ENCODE measurements at regions of chr19 and their contacts with region 1.

Region 1: DNA sequence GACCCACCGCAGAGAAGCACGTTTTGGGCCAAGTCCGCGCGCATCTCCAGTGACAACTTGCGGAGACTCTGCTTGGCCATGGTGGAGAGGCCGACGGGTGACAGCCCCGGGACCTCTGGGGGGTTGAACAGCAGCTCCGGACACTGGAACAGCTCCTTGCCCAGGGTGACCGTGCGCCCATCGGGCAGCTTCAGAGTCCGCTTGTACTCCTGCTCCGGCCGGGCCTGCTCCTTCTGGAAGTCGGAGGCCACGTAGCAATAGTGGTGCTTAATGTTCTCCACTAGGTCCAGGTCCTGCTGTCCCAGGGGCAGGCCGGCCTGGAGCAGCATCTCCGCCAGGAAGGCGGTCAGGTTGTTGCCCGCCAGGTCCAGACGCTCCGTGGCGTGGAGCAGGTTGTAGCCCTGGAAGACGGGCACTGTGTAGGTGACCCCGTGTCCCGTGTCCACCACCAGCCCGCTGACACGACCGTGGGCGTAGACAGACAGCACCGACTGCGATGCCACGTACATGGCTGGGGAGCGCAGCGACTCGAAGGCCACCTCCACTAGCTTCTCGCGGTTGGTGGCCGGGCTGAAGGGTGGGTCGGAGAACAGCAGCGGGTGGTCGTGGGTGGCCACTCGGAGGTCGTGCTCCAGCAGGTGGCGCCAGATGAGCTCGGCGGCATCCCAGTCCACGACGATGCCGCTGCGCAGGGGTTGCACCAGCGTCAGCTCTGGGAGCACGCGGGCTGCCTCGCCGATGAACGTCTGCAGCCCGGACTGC is 743 bp downstream of the ACTL9 start:
- DNase-seq: peak; percentile 32 to 44 (median 36)
- ATAC-seq: peak; percentile 78
- H3K4me3 ChIP-seq: no peak overlapping the region
- H3K27ac ChIP-seq: no peak overlapping the region
- H3K4me1 ChIP-seq: peaks cover 0 to 14% of the 10 kb centered on the region in 2 experiments; a peak in 2 of 5 replicates
- H3K27me3 ChIP-seq: peaks cover 0 to 6% of the 10 kb centered on the region in 2 experiments; a peak in 1 of 5 replicates
- CTCF ChIP-seq: peak; percentile 53 to 63 (median 53)
- EP300 ChIP-seq: no peak
- POLR2A ChIP-seq: no peak
- RAD21 ChIP-seq: peak; percentile 22 to 66; a peak in 2 of 4 replicates

Region 2: DNA sequence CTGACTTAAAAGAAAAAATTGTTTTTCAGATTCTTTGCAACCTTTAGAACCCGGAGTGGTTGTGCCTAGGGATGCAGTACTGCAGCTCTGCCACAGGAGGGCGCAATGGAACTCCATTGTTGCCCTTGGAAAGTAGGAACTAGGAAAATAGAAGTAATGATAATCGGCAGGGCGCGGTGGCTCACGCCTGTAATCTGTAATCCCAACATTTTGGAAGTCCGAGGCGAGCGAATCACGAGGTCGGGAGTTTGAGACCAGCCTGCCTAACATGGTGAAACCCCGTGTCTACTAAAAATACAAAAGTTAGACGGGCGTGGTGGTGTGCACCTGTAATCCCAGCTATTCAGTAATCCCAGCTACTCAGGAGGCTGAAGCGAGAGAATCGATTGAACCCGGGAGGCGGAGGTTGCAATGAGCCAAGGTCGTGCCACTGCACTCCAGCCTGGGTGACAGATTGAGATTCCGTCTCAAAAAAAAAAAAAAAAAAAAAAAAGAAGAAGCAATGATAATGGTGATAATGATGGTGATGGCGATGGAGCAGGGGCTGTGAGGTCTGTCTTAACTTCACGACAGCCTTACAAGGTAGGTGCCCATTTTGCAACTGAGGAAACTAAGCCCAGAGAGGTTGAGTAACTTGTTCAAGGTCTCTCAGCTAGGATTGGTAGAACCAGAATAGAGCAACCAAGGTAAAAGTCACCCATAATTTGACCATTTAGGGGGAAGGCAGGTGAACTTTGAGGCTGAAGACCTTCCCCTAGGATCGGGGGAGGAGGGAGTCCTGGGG is 81.8 kb before region 1 on chr19:
- CTCF ChIA-PET with region 1: interaction called, 3 read pairs
- POLR2A ChIA-PET with region 1: interaction called, 3 read pairs
- in situ Hi-C with region 1: loop called (anchors 10 kb)
- intact Hi-C with region 1: loop called (anchors 10 kb)
- DNase-seq: peak; percentile 68 to 73 (median 71)
- ATAC-seq: peak; percentile 79
- H3K4me3 ChIP-seq: no peak overlapping the region
- H3K27ac ChIP-seq: no peak overlapping the region
- H3K4me1 ChIP-seq: no peaks in the 10 kb centered on the region; a peak in 1 of 5 replicates
- H3K27me3 ChIP-seq: peaks cover 11 to 18% of the 10 kb centered on the region in 2 experiments; a peak in 3 of 5 replicates
- CTCF ChIP-seq: peak; percentile 85 to 94 (median 94)
- EP300 ChIP-seq: no peak
- POLR2A ChIP-seq: no peak
- RAD21 ChIP-seq: peak; percentile 64 to 73

Region 3: DNA sequence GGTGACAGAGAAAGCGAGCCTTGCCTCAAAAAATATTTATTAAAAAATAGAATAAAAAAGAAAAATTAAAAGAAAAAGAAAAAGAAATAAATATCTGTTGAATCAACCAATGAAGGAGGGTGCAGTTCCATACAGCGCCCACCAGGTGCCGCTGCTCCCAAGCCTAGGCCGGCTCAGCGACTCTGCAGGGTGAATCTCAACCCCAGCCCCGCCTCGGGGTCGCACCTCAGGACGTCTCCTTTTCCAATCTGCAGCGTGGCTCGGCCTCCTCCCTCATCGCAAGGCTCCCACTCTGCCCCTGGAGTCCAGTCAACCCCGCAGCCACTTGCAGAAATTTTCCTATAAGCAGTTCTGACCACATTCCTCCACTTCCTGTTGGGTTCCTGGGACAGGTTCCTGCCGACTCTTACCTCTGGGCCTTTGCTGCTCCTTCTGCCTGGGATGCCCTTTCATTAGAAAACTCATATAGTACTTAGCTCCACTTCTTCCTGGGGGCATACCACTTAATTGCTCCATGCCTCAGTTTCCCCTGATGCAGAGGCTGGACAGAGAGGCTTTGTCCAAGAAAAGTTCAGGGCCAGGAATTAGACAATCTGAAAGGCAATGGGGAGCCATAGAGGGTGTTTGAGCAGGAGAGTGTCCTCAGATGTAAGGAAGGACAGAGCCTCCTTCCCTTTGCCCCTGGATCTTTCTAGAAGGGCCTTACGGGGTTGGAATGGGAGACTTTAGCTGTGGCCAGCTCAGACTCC is 43.1 kb before region 1 on chr19:
- CTCF ChIA-PET with region 1: interaction called, 50 read pairs
- POLR2A ChIA-PET with region 1: interaction called, 3 read pairs
- in situ Hi-C with region 1: loop called (anchors 5 kb)
- intact Hi-C with region 1: loop called (anchors 1 kb)
- DNase-seq: peak; percentile 70 to 82 (median 81)
- ATAC-seq: peak; percentile 87
- H3K4me3 ChIP-seq: no peak overlapping the region
- H3K27ac ChIP-seq: no peak overlapping the region
- H3K4me1 ChIP-seq: peaks cover 0 to 6% of the 10 kb centered on the region in 2 experiments; a peak in 3 of 5 replicates
- H3K27me3 ChIP-seq: peaks cover 0 to 21% of the 10 kb centered on the region in 2 experiments; a peak in 2 of 5 replicates
- CTCF ChIP-seq: peak; percentile 90 to 96 (median 90)
- EP300 ChIP-seq: no peak
- POLR2A ChIP-seq: no peak
- RAD21 ChIP-seq: peak; percentile 96 to 97

Region 4: DNA sequence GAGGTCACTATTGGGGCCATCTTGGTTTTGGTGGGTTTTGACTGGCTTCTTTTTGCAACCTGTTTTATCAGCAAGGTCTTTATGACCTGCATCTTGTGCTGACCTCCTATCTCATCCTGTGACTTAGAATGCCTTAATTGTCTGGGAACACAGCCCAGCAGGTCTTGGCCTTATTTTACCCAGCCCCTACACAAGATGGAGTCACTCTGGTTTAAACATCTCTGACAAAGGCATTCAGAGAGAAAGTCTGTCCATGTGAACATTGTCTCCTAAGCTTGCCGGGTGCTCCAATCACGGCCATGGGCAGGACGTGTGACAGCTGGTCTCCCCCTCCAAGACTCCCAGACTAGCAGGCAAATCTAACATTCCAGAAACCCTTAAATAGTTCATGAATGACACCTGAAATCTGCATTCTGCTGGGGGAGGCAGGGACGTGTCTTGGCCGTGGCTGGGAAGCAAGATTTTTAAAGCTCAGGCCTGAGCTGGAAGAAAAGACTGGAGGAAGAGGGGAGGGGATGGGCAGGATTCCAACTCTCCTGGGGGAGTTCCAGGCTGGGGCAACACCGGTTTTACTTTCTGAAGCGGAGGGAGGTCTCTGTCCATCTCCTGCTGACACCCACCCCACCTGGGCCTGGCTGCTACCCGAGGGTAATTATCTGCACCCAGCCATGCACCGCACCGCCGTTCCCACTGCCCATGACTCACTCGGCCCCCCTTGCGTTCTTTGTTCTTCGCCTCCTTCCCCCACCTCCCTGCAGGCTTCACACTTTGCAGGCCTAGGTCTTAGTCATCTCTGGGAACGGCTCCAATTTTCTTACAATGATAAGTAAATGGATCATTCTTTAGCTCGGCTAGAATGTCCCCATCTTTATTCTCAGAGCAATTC is 377.5 kb after region 1 on chr19:
- CTCF ChIA-PET with region 1: no interaction called
- POLR2A ChIA-PET with region 1: no interaction called
- in situ Hi-C with region 1: no loop called
- intact Hi-C with region 1: loop called (anchors 2 kb)
- DNase-seq: peak; percentile 84 to 96 (median 90)
- ATAC-seq: peak; percentile 99
- H3K4me3 ChIP-seq: no peak overlapping the region
- H3K27ac ChIP-seq: no peak overlapping the region; the same call in 2 of the 3 replicates
- H3K4me1 ChIP-seq: peaks cover 12 to 17% of the 10 kb centered on the region in 2 experiments; a peak in 4 of 5 replicates
- H3K27me3 ChIP-seq: no peaks in the 10 kb centered on the region
- CTCF ChIP-seq: no peak
- EP300 ChIP-seq: peak; percentile 74
- POLR2A ChIP-seq: no peak
- RAD21 ChIP-seq: no peak; a peak in 1 of 4 replicates